Lower lobe of right lung (tissue), 2 donors: ENCODE measurements at regions of chr2 and their contacts with region 1.

Region 1: GRCh38 chr2:190277234-190278112 is 42.2 kb downstream of the HIBCH start:
- DNase-seq: no peak
- ATAC-seq: no peak
- H3K4me3 ChIP-seq: no peak overlapping the region
- H3K27ac ChIP-seq: no peak overlapping the region
- H3K4me1 ChIP-seq: no peaks in the 10 kb centered on the region
- H3K27me3 ChIP-seq: no peaks in the 10 kb centered on the region
- CTCF ChIP-seq: peak; percentile 50

Region 2: GRCh38 chr2:190088917-190089316 is 188.6 kb before region 1 on chr2:
- intact Hi-C with region 1: loop called (anchors 10 kb)
- DNase-seq: no peak
- ATAC-seq: peak; percentile 70 to 78
- H3K4me3 ChIP-seq: no peak overlapping the region
- H3K27ac ChIP-seq: no peak overlapping the region
- H3K4me1 ChIP-seq: peaks cover 2% of the 10 kb centered on the region
- H3K27me3 ChIP-seq: no peaks in the 10 kb centered on the region
- CTCF ChIP-seq: peak; percentile 71

Region 3: GRCh38 chr2:190578158-190579057 is 300.9 kb after region 1 on chr2:
- intact Hi-C with region 1: no loop called
- DNase-seq: no peak
- ATAC-seq: peak; percentile 51 to 64
- H3K4me3 ChIP-seq: no peak overlapping the region
- H3K27ac ChIP-seq: no peak overlapping the region
- H3K4me1 ChIP-seq: peaks cover 18% of the 10 kb centered on the region
- H3K27me3 ChIP-seq: no peaks in the 10 kb centered on the region
- CTCF ChIP-seq: no peak